T-cell (primary cell): ENCODE measurements at regions of chr5 and their contacts with region 1.

Region 1: GRCh38 chr5:51651889-51652288 is 268.6 kb downstream of the ISL1 start:
- DNase-seq: no peak
- ATAC-seq: no peak
- H3K4me3 ChIP-seq: no peak overlapping the region
- H3K4me3 Mint-ChIP-seq: no peak overlapping the region
- H3K27ac ChIP-seq: no peak overlapping the region
- H3K27ac Mint-ChIP-seq: no peak overlapping the region
- H3K4me1 ChIP-seq: no peaks in the 10 kb centered on the region
- H3K4me1 Mint-ChIP-seq: no peaks in the 10 kb centered on the region
- H3K27me3 ChIP-seq: no peaks in the 10 kb centered on the region
- H3K27me3 Mint-ChIP-seq: no peaks in the 10 kb centered on the region

Region 2: DNA sequence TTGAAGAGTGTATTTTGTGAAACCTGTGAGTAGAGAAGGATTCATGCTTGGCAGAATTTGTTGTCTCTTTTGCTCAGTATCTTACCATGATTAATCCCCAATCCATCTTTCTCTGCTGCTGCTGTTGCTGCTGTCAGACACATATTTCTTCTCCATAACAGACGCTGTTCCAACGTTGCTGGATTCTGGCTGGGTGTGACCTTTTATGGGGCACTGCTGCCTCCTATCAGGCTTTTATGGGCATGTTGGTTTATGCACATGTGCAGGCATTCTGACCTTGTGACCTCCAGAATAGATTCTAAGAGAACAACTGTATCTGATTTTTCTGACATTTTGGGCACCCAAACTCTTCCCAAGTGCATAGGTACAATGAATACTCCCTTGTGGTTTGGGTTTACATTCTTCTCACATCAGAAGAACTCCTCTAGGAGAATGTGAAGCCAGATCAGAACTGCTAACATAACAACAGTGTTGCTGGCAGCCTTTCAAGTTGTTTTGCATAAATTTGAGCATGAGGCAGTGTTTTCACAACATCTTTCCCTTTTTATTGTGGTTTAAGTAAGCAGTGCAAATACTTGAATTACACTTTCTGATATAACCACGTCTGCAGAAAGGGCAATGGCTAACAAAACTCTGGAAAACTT is 277.9 kb before region 1 on chr5:
- CTCF ChIA-PET with region 1: no interaction called
- POLR2A ChIA-PET with region 1: no interaction called
- DNase-seq: no peak
- ATAC-seq: no peak
- H3K4me3 ChIP-seq: no peak overlapping the region
- H3K4me3 Mint-ChIP-seq: no peak overlapping the region
- H3K27ac ChIP-seq: no peak overlapping the region
- H3K27ac Mint-ChIP-seq: no peak overlapping the region
- H3K4me1 ChIP-seq: no peaks in the 10 kb centered on the region
- H3K4me1 Mint-ChIP-seq: peaks cover 0 to 6% (median 2%) of the 10 kb centered on the region in 3 donors
- H3K27me3 ChIP-seq: peaks cover 5 to 26% of the 10 kb centered on the region in 2 experiments
- H3K27me3 Mint-ChIP-seq: peaks cover 34 to 37% of the 10 kb centered on the region in 2 donors

Region 3: GRCh38 chr5:51598026-51598425 is 53.9 kb before region 1 on chr5:
- CTCF ChIA-PET with region 1: no interaction called
- POLR2A ChIA-PET with region 1: interaction called in 1 of 2 experiments, 14 read pairs
- DNase-seq: no peak
- ATAC-seq: no peak
- H3K4me3 ChIP-seq: no peak overlapping the region
- H3K4me3 Mint-ChIP-seq: no peak overlapping the region
- H3K27ac ChIP-seq: no peak overlapping the region
- H3K27ac Mint-ChIP-seq: no peak overlapping the region
- H3K4me1 ChIP-seq: no peaks in the 10 kb centered on the region
- H3K4me1 Mint-ChIP-seq: no peaks in the 10 kb centered on the region
- H3K27me3 ChIP-seq: no peaks in the 10 kb centered on the region
- H3K27me3 Mint-ChIP-seq: no peaks in the 10 kb centered on the region

Region 4: DNA sequence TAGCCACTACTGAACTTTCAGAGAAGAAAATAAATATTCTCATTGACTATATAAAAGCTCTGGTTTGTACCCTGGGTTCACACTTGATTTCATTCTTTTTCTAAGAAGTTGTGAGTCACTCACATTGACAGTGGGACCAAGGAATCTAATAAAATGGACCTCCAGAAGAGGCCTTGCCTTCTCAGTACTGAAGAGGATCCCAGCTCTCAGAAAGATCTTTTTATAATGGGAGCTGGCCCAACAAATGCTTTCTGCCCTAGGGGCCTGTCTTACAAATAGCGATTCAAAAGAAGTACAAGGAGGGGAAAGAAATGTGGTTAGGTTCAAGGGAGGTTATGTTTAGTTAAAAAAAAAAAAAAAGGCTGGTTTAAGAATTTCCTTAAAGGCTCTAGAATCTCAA is 30.7 kb before region 1 on chr5:
- CTCF ChIA-PET with region 1: no interaction called
- POLR2A ChIA-PET with region 1: no interaction called
- DNase-seq: no peak
- ATAC-seq: no peak
- H3K4me3 ChIP-seq: no peak overlapping the region
- H3K4me3 Mint-ChIP-seq: no peak overlapping the region
- H3K27ac ChIP-seq: no peak overlapping the region
- H3K27ac Mint-ChIP-seq: no peak overlapping the region
- H3K4me1 ChIP-seq: no peaks in the 10 kb centered on the region
- H3K4me1 Mint-ChIP-seq: no peaks in the 10 kb centered on the region
- H3K27me3 ChIP-seq: no peaks in the 10 kb centered on the region
- H3K27me3 Mint-ChIP-seq: no peaks in the 10 kb centered on the region